ENCODE measurements at regions of chr9 and their contacts with region 1.

Region 1: GRCh38 chr9:109817846-109818472 is 38.0 kb downstream of the PALM2AKAP2 start:
- H3K4me3 ChIP-seq: no peak overlapping the region
- H3K27ac ChIP-seq: no peak overlapping the region
- H3K4me1 ChIP-seq: peaks cover 3% of the 10 kb centered on the region; the same call in 1 of the 2 replicates
- CTCF ChIP-seq: no peak

Region 2: DNA sequence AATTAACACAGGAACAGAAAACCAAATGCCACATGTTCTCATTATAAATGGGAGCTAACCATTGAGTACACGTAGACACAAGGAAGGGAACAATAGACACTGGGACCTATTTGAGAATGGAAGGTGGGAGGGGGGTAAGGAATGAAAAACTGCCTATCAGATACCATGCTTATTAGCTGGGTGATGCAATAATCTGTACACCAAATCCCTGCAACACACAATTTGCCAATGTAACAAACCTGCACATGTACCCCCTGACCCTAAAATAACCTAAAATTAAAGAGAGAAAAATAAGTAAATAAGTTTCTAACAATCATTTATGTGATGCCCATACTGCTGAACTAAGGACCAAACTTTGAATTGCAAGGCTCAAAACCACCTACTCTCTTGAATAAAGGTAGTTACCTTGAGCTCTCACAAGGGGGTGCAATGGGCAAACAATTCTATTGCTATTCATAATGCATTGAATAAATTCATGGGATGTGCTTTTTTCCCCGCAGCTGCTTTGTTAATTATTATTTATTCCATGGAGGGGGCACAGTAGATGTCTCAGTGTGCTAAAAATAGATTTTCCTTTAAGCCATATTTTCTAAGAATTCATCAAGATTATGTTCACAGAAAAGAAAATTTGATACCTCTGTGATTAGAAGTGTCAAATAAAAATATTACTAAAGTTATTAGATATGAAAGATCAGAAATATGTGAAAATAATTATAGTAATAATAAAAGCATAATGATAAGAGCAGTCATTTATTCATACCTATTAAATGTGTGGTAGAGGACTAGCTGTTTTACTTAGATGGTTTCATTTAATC is 243.7 kb before region 1 on chr9:
- CTCF ChIA-PET with region 1: interaction called, 68 read pairs
- POLR2A ChIA-PET with region 1: interaction called, 4 read pairs
- H3K4me3 ChIP-seq: no peak overlapping the region
- H3K27ac ChIP-seq: no peak overlapping the region
- H3K4me1 ChIP-seq: no peaks in the 10 kb centered on the region
- CTCF ChIP-seq: no peak

Region 3: DNA sequence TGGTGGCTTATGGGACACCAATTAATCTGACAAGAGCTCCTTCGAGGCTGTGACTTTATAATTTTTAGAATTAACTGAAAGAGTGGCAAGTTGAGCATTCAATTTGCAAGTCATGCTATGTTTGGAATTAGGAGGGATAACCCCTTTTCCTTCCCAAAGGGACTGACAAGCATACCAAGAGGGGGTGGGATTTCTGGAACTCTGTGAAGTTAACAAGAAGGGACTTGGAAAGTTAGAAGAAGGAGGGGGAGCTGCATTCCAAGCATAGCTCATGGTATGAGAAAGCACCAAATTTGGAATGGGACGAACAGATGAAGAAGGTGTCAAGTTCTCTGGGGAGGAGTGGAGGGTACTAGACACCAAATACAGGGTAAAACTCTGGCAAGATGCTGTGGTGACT is 46.9 kb before region 1 on chr9:
- CTCF ChIA-PET with region 1: interaction called, 20 read pairs
- POLR2A ChIA-PET with region 1: no interaction called
- H3K4me3 ChIP-seq: no peak overlapping the region
- H3K27ac ChIP-seq: no peak overlapping the region
- H3K4me1 ChIP-seq: peaks cover 8% of the 10 kb centered on the region
- CTCF ChIP-seq: no peak

Region 4: GRCh38 chr9:109779711-109780452 is 38.1 kb before region 1 on chr9 and contains the start of gene PALM2AKAP2:
- CTCF ChIA-PET with region 1: interaction called, 16 read pairs
- POLR2A ChIA-PET with region 1: interaction called, 8 read pairs
- H3K4me3 ChIP-seq: peak within 1 kb of the TSS; percentile 68
- H3K27ac ChIP-seq: peak within 1 kb of the TSS; percentile 76; the same call in 1 of the 2 replicates
- H3K4me1 ChIP-seq: no peaks in the 10 kb centered on the region; the same call in 1 of the 2 replicates
- CTCF ChIP-seq: peak; percentile 24; the same call in 1 of the 2 replicates

Region 5: DNA sequence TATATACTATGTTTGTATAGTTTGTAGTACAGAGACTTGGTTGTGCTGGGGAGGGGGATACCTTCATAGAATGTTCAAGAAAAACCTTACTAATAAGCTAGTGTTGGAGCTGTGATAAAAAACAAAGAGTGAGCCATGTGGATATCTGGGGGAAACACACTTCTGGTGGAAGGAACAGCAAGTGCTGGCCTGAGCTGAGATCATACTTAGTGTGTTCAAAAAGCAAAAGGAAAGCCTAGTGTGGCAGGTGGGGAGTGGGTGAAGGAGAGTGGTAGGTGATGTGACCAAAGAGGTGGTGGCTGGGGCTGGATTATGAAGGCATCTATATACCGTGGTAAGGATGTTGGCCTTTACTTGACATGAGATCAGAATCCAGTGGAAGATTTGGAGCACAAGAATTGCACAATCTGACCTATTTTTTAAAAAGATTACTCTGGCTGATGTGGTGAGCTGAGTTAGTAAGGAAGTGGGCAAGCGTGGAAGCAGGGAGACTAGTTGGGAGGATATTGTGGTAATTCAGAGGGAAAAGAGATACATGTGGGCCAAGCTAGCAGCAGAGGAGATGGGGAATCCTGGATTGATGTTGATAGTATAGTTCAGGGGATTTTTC is 11.3 kb before region 1 on chr9:
- CTCF ChIA-PET with region 1: interaction called, 11 read pairs
- POLR2A ChIA-PET with region 1: interaction called, 3 read pairs
- H3K4me3 ChIP-seq: no peak overlapping the region
- H3K27ac ChIP-seq: no peak overlapping the region
- H3K4me1 ChIP-seq: no peaks in the 10 kb centered on the region; the same call in 1 of the 2 replicates
- CTCF ChIP-seq: no peak